GM12878 (cell line): ENCODE measurements at regions of chr15 and their contacts with region 1.

Region 1: DNA sequence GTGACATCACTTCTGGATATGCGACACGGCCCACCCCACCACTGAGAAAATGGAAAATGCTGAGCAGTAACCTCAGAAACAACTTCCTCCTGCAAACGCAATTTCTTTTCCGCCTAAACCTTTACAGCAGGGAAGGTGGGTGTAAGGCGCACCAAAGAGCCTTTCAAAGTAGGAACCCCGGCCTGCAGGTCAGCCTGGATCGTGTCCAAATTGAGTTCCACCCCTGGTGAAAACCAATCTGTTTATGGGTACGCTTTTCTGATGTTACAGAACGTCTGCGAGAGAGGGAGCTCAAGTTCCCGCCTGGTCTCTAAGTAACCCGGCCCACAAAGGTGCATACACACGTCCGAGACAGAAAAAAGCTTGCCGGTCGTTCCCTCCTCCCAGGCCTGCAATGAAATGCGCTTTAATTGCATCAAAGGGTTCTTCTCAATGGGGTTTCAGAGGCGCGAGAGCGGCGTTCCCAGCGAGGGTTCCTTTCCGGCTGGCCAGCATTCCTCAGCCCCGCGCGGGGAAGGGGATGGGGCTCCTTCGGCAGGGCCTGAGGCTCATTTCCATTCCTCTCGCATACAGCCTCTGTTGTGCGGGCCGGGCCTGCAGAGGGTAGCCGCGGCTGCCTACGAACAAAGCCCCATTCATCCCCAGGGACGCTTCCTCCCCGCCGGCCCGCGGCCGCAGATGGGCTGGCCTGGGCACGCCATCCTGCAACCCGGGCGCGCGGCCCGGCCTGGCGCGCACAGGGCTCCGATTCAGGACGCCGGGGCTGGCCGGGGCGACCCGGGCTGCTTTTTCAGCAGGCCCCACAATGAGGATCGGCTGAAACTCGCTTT is 138.1 kb downstream of the TMCO5A start:
- DNase-seq: no peak
- ATAC-seq: peak; percentile 83
- H3K4me3 ChIP-seq: peak overlapping the region; percentile 59
- H3K27ac ChIP-seq: peak overlapping the region; percentile 3; the same call in 1 of the 2 replicates
- H3K4me1 ChIP-seq: peaks cover 30% of the 10 kb centered on the region
- H3K27me3 ChIP-seq: no peaks in the 10 kb centered on the region
- CTCF ChIP-seq: peak; percentile 21 to 41 (median 29); a peak in 4 of 6 replicates
- EP300 ChIP-seq: 0 out of 4 replicates have a peak, but pooled peaks of 1 of the 2 experiments have one; percentile 20
- POLR2A ChIP-seq: no peak; the same call in 1 of the 2 replicates
- RAD21 ChIP-seq: peak; percentile 59

Region 2: GRCh38 chr15:38035701-38036100 is 36.9 kb before region 1 on chr15:
- CTCF ChIA-PET with region 1: interaction called, 4 read pairs
- POLR2A ChIA-PET with region 1: interaction called, 3 read pairs
- RAD21 ChIA-PET with region 1: interaction called, 4 read pairs
- SMC1A ChIA-PET with region 1: interaction called, 10 read pairs
- in situ Hi-C with region 1: no loop called
- intact Hi-C with region 1: no loop called
- DNase-seq: no peak
- ATAC-seq: no peak
- H3K4me3 ChIP-seq: no peak overlapping the region
- H3K27ac ChIP-seq: no peak overlapping the region
- H3K4me1 ChIP-seq: no peaks in the 10 kb centered on the region
- H3K27me3 ChIP-seq: no peaks in the 10 kb centered on the region; a peak in 1 of 4 replicates
- CTCF ChIP-seq: no peak
- EP300 ChIP-seq: no peak
- POLR2A ChIP-seq: no peak
- RAD21 ChIP-seq: no peak

Region 3: DNA sequence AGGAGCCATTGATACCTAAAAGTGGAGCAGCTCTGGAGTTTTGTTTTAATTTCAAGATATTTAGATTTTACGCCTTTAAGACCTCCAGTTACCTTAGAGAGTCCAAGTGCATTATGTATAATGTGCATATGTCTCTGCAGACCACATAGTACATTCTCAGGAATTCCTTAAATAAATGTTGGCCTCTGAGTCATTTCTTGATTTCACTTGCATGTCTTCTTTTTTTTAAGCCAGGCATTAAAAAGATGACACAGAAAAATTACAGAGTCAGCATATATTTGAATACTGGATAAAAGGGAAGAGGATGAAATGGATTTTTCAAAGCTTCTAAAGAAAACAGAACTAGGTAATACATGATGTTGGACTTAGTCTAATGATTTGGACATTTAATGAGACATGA is 12.9 kb before region 1 on chr15:
- CTCF ChIA-PET with region 1: interaction called, 18 read pairs
- POLR2A ChIA-PET with region 1: interaction called, 11 read pairs
- RAD21 ChIA-PET with region 1: interaction called, 18 read pairs
- SMC1A ChIA-PET with region 1: interaction called, 44 read pairs
- in situ Hi-C with region 1: no loop called
- intact Hi-C with region 1: no loop called
- DNase-seq: no peak
- ATAC-seq: peak; percentile 44
- H3K4me3 ChIP-seq: no peak overlapping the region
- H3K27ac ChIP-seq: no peak overlapping the region
- H3K4me1 ChIP-seq: peaks cover 4% of the 10 kb centered on the region; the same call in 1 of the 2 replicates
- H3K27me3 ChIP-seq: no peaks in the 10 kb centered on the region
- CTCF ChIP-seq: no peak
- EP300 ChIP-seq: no peak
- POLR2A ChIP-seq: no peak
- RAD21 ChIP-seq: no peak

Region 4: GRCh38 chr15:38129531-38130204 is 57.1 kb after region 1 on chr15:
- CTCF ChIA-PET with region 1: interaction called, 4 read pairs
- POLR2A ChIA-PET with region 1: no interaction called
- RAD21 ChIA-PET with region 1: interaction called, 5 read pairs
- SMC1A ChIA-PET with region 1: interaction called, 12 read pairs
- in situ Hi-C with region 1: no loop called
- intact Hi-C with region 1: no loop called
- DNase-seq: peak; percentile 39
- ATAC-seq: peak; percentile 81
- H3K4me3 ChIP-seq: peak overlapping the region; percentile 38; the same call in 1 of the 2 replicates
- H3K27ac ChIP-seq: peak overlapping the region; percentile 20; the same call in 1 of the 2 replicates
- H3K4me1 ChIP-seq: peaks cover 17% of the 10 kb centered on the region
- H3K27me3 ChIP-seq: no peaks in the 10 kb centered on the region
- CTCF ChIP-seq: no peak
- EP300 ChIP-seq: peak in 1 of 2 experiments; percentile 32; a peak in 1 of 4 replicates
- POLR2A ChIP-seq: no peak
- RAD21 ChIP-seq: no peak

Region 5: GRCh38 chr15:38308797-38309196 is 236.2 kb after region 1 on chr15:
- CTCF ChIA-PET with region 1: no interaction called
- POLR2A ChIA-PET with region 1: no interaction called
- RAD21 ChIA-PET with region 1: no interaction called
- SMC1A ChIA-PET with region 1: no interaction called
- in situ Hi-C with region 1: no loop called
- intact Hi-C with region 1: loop called (anchors 5 kb)
- DNase-seq: peak; percentile 40
- ATAC-seq: peak; percentile 92
- H3K4me3 ChIP-seq: no peak overlapping the region
- H3K27ac ChIP-seq: no peak overlapping the region
- H3K4me1 ChIP-seq: peaks cover 13% of the 10 kb centered on the region
- H3K27me3 ChIP-seq: no peaks in the 10 kb centered on the region
- CTCF ChIP-seq: no peak
- EP300 ChIP-seq: peak in 1 of 2 experiments; percentile 53; a peak in 1 of 4 replicates
- POLR2A ChIP-seq: no peak
- RAD21 ChIP-seq: no peak